ENCODE measurements at regions of chr19 and their contacts with region 1.

Region 1: DNA sequence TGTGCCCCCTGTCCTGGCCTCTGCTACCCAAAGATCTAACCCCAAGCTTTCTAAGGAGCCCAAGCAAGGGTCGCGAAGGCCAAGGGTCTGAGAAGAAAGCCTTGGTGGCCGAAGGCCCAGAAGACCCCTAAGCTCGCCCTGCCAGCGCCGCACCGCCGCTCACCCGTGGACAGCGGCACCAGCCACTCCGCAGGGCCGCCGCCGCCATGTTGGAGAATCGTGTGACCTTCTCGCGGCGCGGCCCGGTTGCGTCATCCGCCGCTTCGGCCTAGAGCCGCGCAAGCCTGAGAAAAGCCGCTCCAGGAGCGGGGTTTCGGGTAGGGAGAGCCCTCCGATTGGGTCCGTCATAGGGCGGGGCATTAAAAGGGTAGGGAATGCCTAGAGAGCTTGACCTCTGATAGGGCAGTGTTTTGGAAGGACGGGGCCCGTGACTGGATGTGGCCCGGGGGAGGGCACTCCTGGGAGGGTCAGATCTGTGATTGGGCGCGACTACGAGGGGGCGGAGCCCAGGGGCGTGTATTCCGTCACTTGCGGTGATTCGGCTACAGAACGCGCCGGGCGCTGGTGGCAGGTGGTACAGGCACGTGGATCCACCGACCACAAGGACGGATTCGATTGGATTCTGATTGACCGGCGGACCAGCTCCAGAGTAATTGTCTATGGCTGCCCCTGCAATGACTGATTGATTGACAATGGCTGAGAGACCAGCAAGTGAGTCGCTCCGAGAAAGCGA is at the start of gene TIMM44:
- DNase-seq: peak; percentile 95 to 99 (median 98)
- ATAC-seq: peak; percentile 97
- H3K4me3 ChIP-seq: peak within 1 kb of the TSS; percentile 77 to 96
- H3K4me3 Mint-ChIP-seq: peak within 1 kb of the TSS; percentile 91
- H3K27ac ChIP-seq: peak within 1 kb of the TSS; percentile 96 to 97
- H3K27ac Mint-ChIP-seq: peak within 1 kb of the TSS; percentile 96
- H3K4me1 ChIP-seq: peaks cover 17% of the 10 kb centered on the region
- H3K4me1 Mint-ChIP-seq: peaks cover 35% of the 10 kb centered on the region
- H3K27me3 ChIP-seq: no peaks in the 10 kb centered on the region
- H3K27me3 Mint-ChIP-seq: no peaks in the 10 kb centered on the region
- CTCF ChIP-seq: no peak
- total RNA-seq, gene TIMM44: 97.7 to 101 TPM

Region 2: DNA sequence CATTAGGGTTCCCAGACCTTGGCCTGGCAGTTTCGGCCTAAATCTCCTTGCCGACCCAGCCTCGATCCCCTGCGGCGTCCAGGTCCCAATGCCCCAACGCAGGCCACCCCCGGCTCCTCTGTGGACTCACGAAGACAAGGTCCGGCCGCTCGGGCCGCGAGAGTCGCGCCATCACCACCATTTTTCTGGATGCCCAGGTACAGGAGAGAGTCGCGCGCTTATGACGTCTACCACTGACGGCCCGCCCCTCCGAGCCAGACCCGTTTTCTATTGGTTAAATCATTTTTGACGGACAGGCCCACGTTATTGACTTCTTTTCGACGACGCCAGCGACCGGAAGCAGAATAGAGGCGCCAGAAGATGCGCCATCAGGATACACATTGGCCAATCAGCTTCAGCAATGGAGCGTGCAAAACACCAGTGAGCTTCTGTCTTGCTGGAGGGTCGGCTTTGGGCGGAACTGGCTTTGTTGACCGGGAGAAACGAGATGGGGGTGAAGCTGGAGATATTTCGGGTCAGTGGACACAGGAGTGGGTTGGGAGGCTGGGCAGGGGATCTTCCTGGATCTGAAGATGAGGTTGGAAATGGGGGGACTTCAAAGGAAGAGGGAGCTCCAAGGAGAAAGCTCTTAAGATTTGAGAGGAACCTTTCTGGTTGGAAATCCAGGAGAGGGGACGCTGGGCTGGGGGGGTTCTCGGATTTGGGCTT is 314.1 kb before region 1 on chr19 and contains the starts of genes PET100 and XAB2:
- CTCF ChIA-PET with region 1: no interaction called
- POLR2A ChIA-PET with region 1: interaction called, 4 read pairs
- intact Hi-C with region 1: loop called in 1 of 2 experiments (anchors 1 kb)
- DNase-seq: peak; percentile 90 to 99 (median 94)
- ATAC-seq: peak; percentile 94
- H3K4me3 ChIP-seq: peak within 1 kb of the TSS; percentile 98 to 100
- H3K4me3 Mint-ChIP-seq: peak within 1 kb of the TSS; percentile 97
- H3K27ac ChIP-seq: peak within 1 kb of the TSS; percentile 92 to 99
- H3K27ac Mint-ChIP-seq: peak within 1 kb of the TSS; percentile 99
- H3K4me1 ChIP-seq: peaks cover 27% of the 10 kb centered on the region
- H3K4me1 Mint-ChIP-seq: peaks cover 36% of the 10 kb centered on the region
- H3K27me3 ChIP-seq: no peaks in the 10 kb centered on the region
- H3K27me3 Mint-ChIP-seq: no peaks in the 10 kb centered on the region
- CTCF ChIP-seq: no peak
- total RNA-seq, gene PET100: 186 to 188 TPM
- total RNA-seq, gene XAB2: 127 to 133 TPM

Region 3: GRCh38 chr19:7868676-7869452 is 74.7 kb before region 1 on chr19:
- CTCF ChIA-PET with region 1: interaction called, 11 read pairs
- POLR2A ChIA-PET with region 1: interaction called, 3 read pairs
- intact Hi-C with region 1: no loop called
- DNase-seq: peak; percentile 71 to 95 (median 85)
- ATAC-seq: peak; percentile 62
- H3K4me3 ChIP-seq: peak overlapping the region; percentile 61 to 62
- H3K4me3 Mint-ChIP-seq: peak overlapping the region; percentile 82
- H3K27ac ChIP-seq: peak overlapping the region; percentile 64 to 65
- H3K27ac Mint-ChIP-seq: peak overlapping the region; percentile 90
- H3K4me1 ChIP-seq: peaks cover 63% of the 10 kb centered on the region
- H3K4me1 Mint-ChIP-seq: peaks cover 44% of the 10 kb centered on the region
- H3K27me3 ChIP-seq: peaks cover 4 to 25% of the 10 kb centered on the region in 2 experiments
- H3K27me3 Mint-ChIP-seq: peaks cover 27% of the 10 kb centered on the region
- CTCF ChIP-seq: peak; percentile 82

Region 4: DNA sequence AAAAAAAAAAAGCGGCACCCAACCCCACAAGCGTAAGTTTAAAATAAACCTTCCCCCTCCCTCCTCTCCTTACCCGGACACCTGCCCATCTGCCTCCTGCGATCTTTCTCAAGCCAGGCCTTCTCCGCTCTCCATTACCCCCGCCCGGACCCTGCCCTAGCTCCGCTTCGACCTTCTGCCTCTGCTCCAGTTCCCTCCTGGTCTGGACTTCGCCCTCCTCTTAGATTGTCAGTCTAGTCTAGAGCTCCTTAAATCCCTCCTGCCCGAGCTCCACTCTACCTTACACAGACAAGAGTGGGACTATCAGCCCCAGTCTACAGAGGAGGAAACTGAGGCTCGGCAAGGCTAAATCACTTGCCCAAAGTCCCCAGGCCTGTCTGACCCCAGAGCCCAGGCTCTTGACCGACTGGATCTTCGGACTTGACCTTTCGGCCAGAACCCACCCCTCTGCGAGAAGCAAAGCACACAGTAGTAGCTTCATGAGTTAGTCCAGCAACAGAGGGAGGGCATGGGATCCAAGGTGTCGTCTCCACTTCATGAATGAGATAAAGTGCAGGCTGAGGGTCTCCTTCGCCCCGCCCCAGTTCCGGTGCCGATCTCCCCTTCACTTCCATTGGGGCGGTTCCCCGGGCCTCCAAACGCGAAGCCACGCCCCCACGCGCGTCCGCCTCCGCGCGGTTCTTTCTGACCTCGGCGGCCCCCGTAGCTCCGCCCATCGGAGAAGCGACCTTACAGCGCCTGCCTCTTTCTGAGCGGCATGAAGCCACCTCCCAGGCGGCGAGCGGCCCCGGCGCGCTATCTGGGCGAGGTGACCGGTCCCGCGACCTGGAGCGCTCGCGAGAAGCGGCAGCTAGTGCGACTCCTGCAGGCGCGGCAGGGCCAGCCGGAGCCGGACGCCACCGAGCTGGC is 23.7 kb before region 1 on chr19 and contains the start of gene SNAPC2:
- CTCF ChIA-PET with region 1: interaction called, 34 read pairs
- POLR2A ChIA-PET with region 1: interaction called, 14 read pairs
- intact Hi-C with region 1: loop called (anchors 1 kb)
- DNase-seq: peak; percentile 93 to 98 (median 96)
- ATAC-seq: peak; percentile 63
- H3K4me3 ChIP-seq: peak within 1 kb of the TSS; percentile 51 to 87
- H3K4me3 Mint-ChIP-seq: peak within 1 kb of the TSS; percentile 88
- H3K27ac ChIP-seq: peak within 1 kb of the TSS; percentile 55 to 65
- H3K27ac Mint-ChIP-seq: peak within 1 kb of the TSS; percentile 90
- H3K4me1 ChIP-seq: peaks cover 42% of the 10 kb centered on the region
- H3K4me1 Mint-ChIP-seq: peaks cover 48% of the 10 kb centered on the region
- H3K27me3 ChIP-seq: peaks cover 21 to 27% of the 10 kb centered on the region in 2 experiments
- H3K27me3 Mint-ChIP-seq: peaks cover 25% of the 10 kb centered on the region
- CTCF ChIP-seq: no peak
- total RNA-seq, gene SNAPC2: 15.4 to 17.0 TPM

Region 5: DNA sequence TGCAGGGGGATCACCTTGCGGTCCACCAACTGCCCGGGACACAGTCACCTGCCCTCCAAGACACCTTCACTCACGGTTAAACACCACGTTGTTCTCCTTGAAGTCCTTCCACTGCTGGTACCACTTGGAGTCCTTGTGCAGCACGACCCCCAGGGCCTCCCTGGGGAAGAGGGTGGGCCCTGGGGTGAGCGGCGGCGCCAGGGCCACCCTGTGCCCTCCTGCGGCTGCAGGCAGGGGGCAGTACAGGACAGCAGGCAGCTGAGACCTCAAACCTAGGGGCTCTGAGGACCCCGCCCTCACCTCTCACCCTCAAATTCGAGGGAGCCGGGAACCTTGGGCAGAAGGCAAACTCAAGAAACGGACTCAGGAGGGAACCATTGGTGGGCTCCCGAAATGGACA is 10.2 kb before region 1 on chr19:
- CTCF ChIA-PET with region 1: interaction called, 23 read pairs
- POLR2A ChIA-PET with region 1: interaction called, 9 read pairs
- intact Hi-C with region 1: loop called (anchors 1 kb)
- DNase-seq: peak in 2 of 9 experiments; percentile 20 to 24
- ATAC-seq: no peak
- H3K4me3 ChIP-seq: no peak overlapping the region
- H3K4me3 Mint-ChIP-seq: no peak overlapping the region
- H3K27ac ChIP-seq: no peak overlapping the region
- H3K27ac Mint-ChIP-seq: no peak overlapping the region
- H3K4me1 ChIP-seq: no peaks in the 10 kb centered on the region
- H3K4me1 Mint-ChIP-seq: peaks cover 7% of the 10 kb centered on the region
- H3K27me3 ChIP-seq: no peaks in the 10 kb centered on the region
- H3K27me3 Mint-ChIP-seq: no peaks in the 10 kb centered on the region
- CTCF ChIP-seq: no peak

Region 6: DNA sequence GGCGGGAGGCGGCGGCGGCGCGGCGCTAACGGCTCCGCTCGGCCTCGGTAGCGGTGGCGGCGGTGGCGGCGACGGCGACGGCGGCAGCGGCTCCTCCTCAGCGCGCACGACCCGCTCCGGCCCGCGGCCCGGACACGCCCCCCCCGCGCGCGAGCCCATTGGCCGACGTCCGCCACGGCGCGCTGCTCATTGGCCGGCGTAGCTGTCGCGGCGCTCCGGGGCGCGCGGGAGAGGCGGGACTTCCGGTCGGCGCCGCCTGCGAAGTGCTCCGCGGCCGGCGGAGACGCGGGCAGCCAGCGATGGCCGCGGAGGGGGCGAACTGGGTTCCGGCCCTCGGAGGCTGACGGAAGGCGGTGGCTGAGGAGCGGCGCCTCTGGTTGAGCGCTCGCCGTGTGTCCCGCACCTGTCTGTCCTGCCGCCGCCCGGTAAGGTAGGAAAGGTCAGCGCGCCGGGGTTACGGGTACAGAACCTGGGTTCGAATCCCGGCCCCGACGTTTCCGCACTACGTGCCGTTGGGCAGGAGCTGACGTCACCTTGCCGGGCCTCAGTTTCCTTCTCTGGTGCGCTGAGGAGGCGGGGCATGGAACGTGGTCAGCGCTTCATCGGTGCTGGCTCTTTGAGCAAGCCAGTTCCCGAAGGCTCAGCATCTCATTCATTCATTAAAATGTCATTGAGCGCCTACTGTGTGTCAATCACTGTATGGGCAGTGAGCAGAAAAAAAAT is 62.1 kb after region 1 on chr19 and contains the start of gene ELAVL1:
- CTCF ChIA-PET with region 1: interaction called, 28 read pairs
- POLR2A ChIA-PET with region 1: interaction called, 9 read pairs
- intact Hi-C with region 1: loop called (anchors 1 kb)
- DNase-seq: peak; percentile 78 to 95 (median 87)
- ATAC-seq: peak; percentile 91
- H3K4me3 ChIP-seq: peak within 1 kb of the TSS; percentile 66 to 87
- H3K4me3 Mint-ChIP-seq: peak within 1 kb of the TSS; percentile 85
- H3K27ac ChIP-seq: peak within 1 kb of the TSS; percentile 70
- H3K27ac Mint-ChIP-seq: peak within 1 kb of the TSS; percentile 81
- H3K4me1 ChIP-seq: peaks cover 38% of the 10 kb centered on the region
- H3K4me1 Mint-ChIP-seq: peaks cover 38% of the 10 kb centered on the region
- H3K27me3 ChIP-seq: no peaks in the 10 kb centered on the region
- H3K27me3 Mint-ChIP-seq: no peaks in the 10 kb centered on the region
- CTCF ChIP-seq: no peak
- total RNA-seq, gene ELAVL1: 19.9 to 23.5 TPM

Region 7: DNA sequence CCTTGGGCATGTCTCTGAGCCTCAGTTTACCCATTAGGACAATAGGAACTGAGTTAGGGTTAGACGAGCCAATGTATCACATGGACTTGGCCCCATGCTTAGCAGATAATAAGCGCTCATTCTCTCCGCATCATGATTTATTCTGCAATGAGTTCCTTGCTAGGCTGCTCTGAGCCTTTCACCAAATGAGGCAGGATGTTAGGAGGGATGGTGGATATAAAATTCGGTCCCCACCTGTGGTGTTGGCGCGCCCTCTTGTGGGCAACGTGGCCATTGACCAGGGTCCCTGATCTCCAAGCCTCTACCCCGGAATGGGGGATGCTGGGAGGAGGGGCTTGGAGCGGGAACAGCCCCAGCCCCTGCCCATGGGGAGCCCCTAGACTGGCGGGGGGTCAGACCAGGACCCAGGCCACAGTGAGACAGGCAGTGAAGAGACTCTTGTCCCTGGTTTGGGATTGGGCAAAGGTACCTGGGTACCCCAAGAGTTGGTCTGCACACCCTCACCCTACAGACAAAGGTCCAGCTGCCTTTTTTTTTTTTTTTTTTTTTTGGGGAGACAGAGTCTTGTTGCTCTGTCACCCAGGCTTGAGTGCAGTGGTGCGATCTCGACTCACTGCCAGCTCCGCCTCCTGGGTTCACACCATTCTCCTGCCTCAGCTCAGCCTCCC is 309.4 kb after region 1 on chr19:
- CTCF ChIA-PET with region 1: interaction called, 19 read pairs
- POLR2A ChIA-PET with region 1: no interaction called
- intact Hi-C with region 1: loop called in 1 of 2 experiments (anchors 1 kb)
- DNase-seq: peak; percentile 66 to 91 (median 84)
- ATAC-seq: peak; percentile 93
- H3K4me3 ChIP-seq: no peak overlapping the region
- H3K4me3 Mint-ChIP-seq: no peak overlapping the region
- H3K27ac ChIP-seq: no peak overlapping the region
- H3K27ac Mint-ChIP-seq: no peak overlapping the region
- H3K4me1 ChIP-seq: peaks cover 3% of the 10 kb centered on the region
- H3K4me1 Mint-ChIP-seq: peaks cover 10% of the 10 kb centered on the region
- H3K27me3 ChIP-seq: no peaks in the 10 kb centered on the region
- H3K27me3 Mint-ChIP-seq: no peaks in the 10 kb centered on the region
- CTCF ChIP-seq: peak; percentile 85

Region 8: GRCh38 chr19:8352134-8352827 is 408.7 kb after region 1 on chr19:
- CTCF ChIA-PET with region 1: no interaction called
- POLR2A ChIA-PET with region 1: no interaction called
- intact Hi-C with region 1: no loop called
- DNase-seq: no peak
- ATAC-seq: no peak
- H3K4me3 ChIP-seq: no peak overlapping the region
- H3K4me3 Mint-ChIP-seq: no peak overlapping the region
- H3K27ac ChIP-seq: no peak overlapping the region
- H3K27ac Mint-ChIP-seq: no peak overlapping the region
- H3K4me1 ChIP-seq: peaks cover 7% of the 10 kb centered on the region
- H3K4me1 Mint-ChIP-seq: no peaks in the 10 kb centered on the region
- H3K27me3 ChIP-seq: peaks cover 0 to 17% of the 10 kb centered on the region in 2 experiments
- H3K27me3 Mint-ChIP-seq: peaks cover 14% of the 10 kb centered on the region
- CTCF ChIP-seq: no peak

Measured in CD8-positive, alpha-beta T cell (primary cell).